Activated naive CD4-positive, alpha-beta T cell treated with anti-CD3 and anti-CD28 coated beads for 36 hours (primary cell): ENCODE measurements at regions of chr20 and their contacts with region 1.

Region 1: GRCh38 chr20:49915378-49916145 is at the start of gene SPATA2:
- DNase-seq: peak; percentile 93
- H3K4me3 Mint-ChIP-seq: peak within 1 kb of the TSS; percentile 99
- H3K27ac Mint-ChIP-seq: peak within 1 kb of the TSS; percentile 100
- H3K4me1 Mint-ChIP-seq: peaks cover 34% of the 10 kb centered on the region
- H3K27me3 Mint-ChIP-seq: no peaks in the 10 kb centered on the region
- total RNA-seq, gene SPATA2: 6.6 to 7.3 TPM

Region 2: GRCh38 chr20:49936153-49937027 is 20.8 kb after region 1 on chr20 and contains the start of gene RNF114:
- CTCF ChIA-PET with region 1: interaction called, 5 read pairs
- intact Hi-C with region 1: loop called (anchors 1 kb)
- DNase-seq: peak; percentile 93
- H3K4me3 Mint-ChIP-seq: peak within 1 kb of the TSS; percentile 96
- H3K27ac Mint-ChIP-seq: peak within 1 kb of the TSS; percentile 83
- H3K4me1 Mint-ChIP-seq: peaks cover 46% of the 10 kb centered on the region
- H3K27me3 Mint-ChIP-seq: no peaks in the 10 kb centered on the region
- total RNA-seq, gene RNF114: 72.3 to 76.5 TPM